Aorta (tissue), 5 donors: ENCODE measurements at regions of chr10 and their contacts with region 1.

Region 1: DNA sequence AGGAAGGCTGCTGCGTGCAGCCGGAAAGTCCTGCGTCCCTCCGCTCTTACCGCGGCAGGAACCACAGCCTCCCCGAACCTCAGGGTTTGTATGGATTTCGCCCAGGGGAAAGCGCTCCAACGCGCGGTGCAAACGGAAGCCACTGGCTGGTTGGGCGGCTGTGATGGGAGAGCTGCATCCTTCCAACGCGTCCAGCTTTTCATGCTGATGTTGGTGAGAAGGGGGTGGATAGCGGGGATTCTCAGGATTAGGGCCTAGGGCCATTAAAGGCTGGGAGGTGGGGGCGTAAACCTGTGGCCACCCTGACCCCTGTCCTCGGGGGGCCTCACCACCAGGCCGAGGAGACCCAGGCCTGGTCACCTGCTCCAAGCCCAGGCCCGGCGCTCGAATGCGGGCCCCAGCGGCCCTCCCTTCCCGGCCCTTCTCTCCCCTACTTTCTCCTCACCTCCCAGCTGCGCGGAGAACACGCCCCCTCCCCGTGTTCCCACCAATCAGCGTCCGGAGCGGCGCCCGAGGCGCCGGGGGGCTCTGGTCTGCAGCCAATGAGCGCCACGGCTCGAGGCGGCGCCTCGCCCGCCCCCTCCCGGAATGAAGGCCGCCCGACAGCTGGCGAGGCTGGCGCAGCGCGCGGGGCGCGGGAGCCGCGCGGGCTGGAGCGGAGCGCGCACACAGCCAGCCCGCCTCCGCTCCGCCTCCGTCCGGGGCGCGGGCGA is 458 bp upstream of the NANOS1 start:
- DNase-seq: peak; percentile 92 to 96
- ATAC-seq: peak; percentile 89
- H3K4me3 ChIP-seq: peak overlapping the region in 1 of 2 donors; percentile 57
- H3K27ac ChIP-seq: peak overlapping the region in 1 of 2 donors; percentile 78
- H3K4me1 ChIP-seq: peaks cover 0 to 2% of the 10 kb centered on the region in 2 donors
- H3K27me3 ChIP-seq: no peaks in the 10 kb centered on the region

Region 2: DNA sequence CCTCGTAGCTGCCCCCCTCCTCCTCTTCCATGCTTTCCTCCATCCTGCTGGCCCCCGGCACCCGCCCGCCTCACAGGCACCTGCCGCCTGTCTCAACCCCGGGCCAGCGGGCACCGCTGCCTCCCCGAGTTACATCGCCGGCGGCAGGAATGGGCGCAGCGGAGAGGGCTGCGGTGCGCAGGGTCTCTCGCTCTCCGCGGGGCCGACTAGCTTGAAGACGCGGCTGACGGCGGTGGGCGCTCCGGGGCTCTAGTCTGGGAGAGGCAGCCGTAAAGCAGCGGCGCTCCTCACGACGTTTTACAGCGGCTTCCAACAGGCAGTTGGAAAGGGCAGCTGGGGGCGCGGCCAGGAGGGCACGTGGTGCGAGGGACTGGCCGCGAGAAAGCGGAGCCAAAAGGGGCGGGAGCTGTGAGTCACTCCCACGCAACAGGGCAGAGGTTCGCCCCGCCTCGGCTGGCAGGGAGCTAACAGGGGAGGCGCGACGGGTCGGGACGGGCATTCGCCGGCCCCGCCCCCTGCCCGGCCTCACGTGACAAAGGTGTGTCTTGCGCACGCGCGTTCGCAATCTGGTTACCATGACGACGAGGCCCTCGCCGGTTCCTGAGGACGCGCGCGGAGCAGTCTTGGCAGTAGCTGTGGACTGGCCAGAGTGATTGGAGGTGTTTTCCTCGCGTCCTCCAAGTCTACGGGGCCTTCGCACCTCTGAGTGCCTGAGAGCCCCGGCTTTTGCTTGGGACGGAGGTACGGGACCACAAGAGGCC is 274.2 kb before region 1 on chr10 and contains the start of gene CACUL1:
- intact Hi-C with region 1: loop called (anchors 2 to 10 kb)
- DNase-seq: peak; percentile 100
- ATAC-seq: peak; percentile 100
- H3K4me3 ChIP-seq: peak within 1 kb of the TSS; percentile 86 to 88
- H3K27ac ChIP-seq: peak within 1 kb of the TSS in 1 of 2 donors; percentile 55
- H3K4me1 ChIP-seq: no peaks in the 10 kb centered on the region
- H3K27me3 ChIP-seq: no peaks in the 10 kb centered on the region
- total RNA-seq, gene CACUL1: 39.2 to 48.7 TPM

Region 3: GRCh38 chr10:118870467-118871243 is 158.4 kb before region 1 on chr10:
- intact Hi-C with region 1: loop called in 1 of 2 experiments (anchors 10 kb)
- DNase-seq: no peak
- ATAC-seq: peak; percentile 60
- H3K4me3 ChIP-seq: no peak overlapping the region
- H3K27ac ChIP-seq: peak overlapping the region in 1 of 2 donors; percentile 52
- H3K4me1 ChIP-seq: peaks cover 2 to 9% of the 10 kb centered on the region in 2 donors
- H3K27me3 ChIP-seq: no peaks in the 10 kb centered on the region

Region 4: DNA sequence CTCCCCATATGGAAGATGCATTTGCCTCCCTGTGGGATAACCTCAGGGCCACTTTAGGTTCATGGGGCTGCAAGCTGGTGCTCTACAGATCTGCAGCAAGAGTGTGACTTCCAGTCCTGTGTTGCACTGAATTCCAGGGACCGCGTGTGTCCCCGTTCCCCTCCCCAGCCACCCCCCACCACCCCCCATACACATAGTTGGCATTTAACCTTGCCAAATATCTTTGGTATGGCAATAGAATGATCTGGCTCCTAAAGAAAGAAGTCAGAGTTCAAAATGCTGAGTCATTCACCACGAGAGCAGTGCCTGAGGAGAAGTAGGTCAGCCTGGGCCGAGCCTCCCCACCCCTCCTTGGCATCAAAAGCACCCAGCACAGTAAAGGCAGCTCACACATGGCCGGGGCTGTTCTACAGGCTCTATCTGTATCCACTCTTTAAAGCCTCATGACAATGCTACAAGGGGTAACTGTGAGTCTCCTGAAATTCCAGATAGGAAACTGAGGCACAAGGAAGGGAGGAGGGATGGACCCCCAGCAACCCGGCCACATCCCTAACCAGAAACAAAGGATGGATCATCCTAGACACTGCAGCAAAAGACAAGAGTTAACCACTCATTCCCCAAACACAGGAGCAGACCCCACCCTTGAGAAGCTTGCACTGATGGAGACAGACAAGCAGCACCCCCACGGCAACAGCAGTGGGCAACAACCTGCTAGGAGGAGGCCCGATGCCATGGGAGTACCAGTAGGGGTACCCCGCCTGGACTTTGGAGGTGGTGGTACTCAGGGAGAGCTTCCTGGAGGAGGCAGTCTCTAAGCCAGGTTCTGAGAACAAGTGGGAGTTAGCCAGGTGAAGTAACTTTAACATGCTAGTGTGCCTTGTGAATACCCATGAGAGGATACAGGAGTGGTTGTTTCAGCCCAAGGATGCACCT is 69.8 kb before region 1 on chr10:
- intact Hi-C with region 1: loop called in 1 of 2 experiments (anchors 5 kb)
- DNase-seq: peak in 1 of 2 donors; percentile 69
- ATAC-seq: peak; percentile 82
- H3K4me3 ChIP-seq: no peak overlapping the region
- H3K27ac ChIP-seq: no peak overlapping the region
- H3K4me1 ChIP-seq: peaks cover 0 to 3% of the 10 kb centered on the region in 2 donors
- H3K27me3 ChIP-seq: no peaks in the 10 kb centered on the region

Region 5: GRCh38 chr10:119079632-119080520 is 50.8 kb after region 1 on chr10:
- intact Hi-C with region 1: loop called (anchors 5 kb)
- DNase-seq: peak; percentile 86 to 92
- ATAC-seq: peak; percentile 93
- H3K4me3 ChIP-seq: peak overlapping the region; percentile 72 to 75
- H3K27ac ChIP-seq: peak overlapping the region; percentile 85 to 96
- H3K4me1 ChIP-seq: no peaks in the 10 kb centered on the region
- H3K27me3 ChIP-seq: no peaks in the 10 kb centered on the region